ENCODE measurements at regions of chr15 and their contacts with region 1.

Region 1: GRCh38 chr15:72671535-72671934 is 14.4 kb downstream of the HIGD2B start:
- DNase-seq: no peak
- H3K4me3 ChIP-seq: no peak overlapping the region
- H3K4me3 Mint-ChIP-seq: no peak overlapping the region
- H3K27ac ChIP-seq: no peak overlapping the region
- H3K27ac Mint-ChIP-seq: no peak overlapping the region
- H3K4me1 ChIP-seq: peaks cover 4% of the 10 kb centered on the region
- H3K4me1 Mint-ChIP-seq: peaks cover 0 to 4% (median under 1%) of the 10 kb centered on the region in 4 donors
- H3K27me3 ChIP-seq: no peaks in the 10 kb centered on the region
- H3K27me3 Mint-ChIP-seq: peaks cover 7 to 13% of the 10 kb centered on the region in 2 donors

Region 2: DNA sequence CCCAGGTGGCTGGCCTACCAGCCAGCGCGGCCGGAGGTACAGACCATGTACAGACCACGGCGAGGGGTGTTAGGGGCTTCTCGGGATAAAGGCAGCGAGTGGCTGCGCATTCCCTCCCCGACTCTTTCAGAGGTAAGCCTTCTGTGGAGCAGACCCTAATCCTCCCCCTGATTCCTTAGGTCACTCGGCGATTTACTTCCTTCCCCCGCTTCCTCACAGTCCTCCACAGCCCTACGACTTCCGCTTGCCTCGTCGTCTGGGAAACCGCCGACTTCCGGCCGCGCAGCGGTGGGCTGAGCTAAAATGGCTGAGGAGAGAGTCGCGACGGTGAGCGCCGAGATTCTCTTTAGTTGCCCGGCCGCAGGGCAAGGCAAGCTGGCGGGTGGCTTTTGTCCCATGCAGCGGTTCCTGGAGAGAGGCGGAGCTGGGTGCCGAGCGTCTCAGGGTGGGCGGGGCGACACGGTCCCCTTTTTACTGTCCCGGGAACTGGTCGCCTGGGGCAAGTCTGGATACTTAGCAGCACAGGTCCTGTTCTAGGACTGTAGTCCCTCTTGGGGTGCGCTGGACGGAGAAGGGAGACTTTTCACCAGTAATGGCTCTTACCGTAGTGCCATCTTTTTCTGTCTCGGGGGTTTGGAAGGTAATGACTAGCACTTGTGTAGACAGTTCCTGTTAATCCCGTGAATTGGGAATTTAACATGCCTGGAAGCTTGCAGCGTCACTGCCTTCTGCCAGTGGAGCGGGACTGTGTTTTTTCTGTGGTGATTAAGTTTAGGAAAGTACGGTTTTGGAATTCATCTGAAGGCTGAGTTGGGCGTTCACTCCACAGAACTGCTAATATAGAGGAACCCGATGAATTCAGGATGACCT is 14.6 kb after region 1 on chr15 and contains the starts of genes BBS4 and HIGD2B:
- CTCF ChIA-PET with region 1: interaction called, 14 read pairs
- POLR2A ChIA-PET with region 1: interaction called, 6 read pairs
- intact Hi-C with region 1: no loop called
- DNase-seq: peak; percentile 81 to 86 (median 83)
- H3K4me3 ChIP-seq: peak within 1 kb of the TSS; percentile 95 to 97
- H3K4me3 Mint-ChIP-seq: peak within 1 kb of the TSS; percentile 94 to 99 (median 98)
- H3K27ac ChIP-seq: peak within 1 kb of the TSS; percentile 76
- H3K27ac Mint-ChIP-seq: peak within 1 kb of the TSS; percentile 88 to 99 (median 97)
- H3K4me1 ChIP-seq: peaks cover 15% of the 10 kb centered on the region
- H3K4me1 Mint-ChIP-seq: peaks cover 10 to 21% (median 16%) of the 10 kb centered on the region in 4 donors
- H3K27me3 ChIP-seq: no peaks in the 10 kb centered on the region
- H3K27me3 Mint-ChIP-seq: no peaks in the 10 kb centered on the region
- total RNA-seq, gene BBS4: 19.1 to 22.2 TPM
- total RNA-seq, gene HIGD2B: 0.39 to 0.41 TPM